ENCODE measurements at regions of chr17 and their contacts with region 1.

Region 1: DNA sequence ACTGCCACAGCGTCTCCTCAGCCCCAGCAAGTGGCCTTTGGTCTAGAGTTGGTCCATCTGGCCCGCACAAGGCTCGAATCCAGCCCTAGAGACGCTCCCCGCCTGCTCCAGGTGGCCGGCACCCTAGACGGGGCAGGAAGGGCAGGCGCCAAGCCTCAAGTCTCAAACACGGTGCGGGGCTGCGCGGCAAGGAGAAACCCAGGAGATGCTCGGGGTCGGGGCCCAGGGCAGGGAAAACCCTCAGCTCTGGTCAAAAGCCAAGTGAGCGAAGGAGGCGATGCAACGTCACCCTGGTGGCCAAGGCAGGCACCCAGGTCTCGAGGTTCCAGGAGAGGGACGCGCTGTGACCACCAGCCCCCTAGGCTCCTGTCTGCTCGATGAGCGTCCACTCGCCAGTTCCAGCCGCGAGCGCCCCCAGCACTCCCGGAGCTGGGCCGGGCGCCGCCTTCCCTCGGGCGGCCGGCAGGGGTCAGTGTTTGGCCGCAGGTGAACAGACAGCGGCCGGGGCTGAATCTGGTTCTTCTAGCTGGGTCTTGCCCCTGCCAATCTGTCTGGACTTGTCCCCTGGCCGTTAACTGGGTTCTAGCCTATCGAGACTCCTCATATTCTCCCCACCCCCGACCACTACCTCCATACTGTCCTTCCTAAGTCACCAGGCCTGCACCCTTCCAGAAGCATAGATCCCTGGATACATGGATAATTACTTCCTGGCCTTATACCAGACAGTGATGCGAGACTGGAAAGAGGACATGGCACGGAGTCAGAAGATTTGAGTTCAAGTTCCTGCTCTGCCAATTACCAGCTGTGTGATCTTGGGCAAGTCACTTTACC is 44.0 kb downstream of the PRAC1 start:
- DNase-seq: peak; percentile 69 to 87
- H3K4me3 ChIP-seq: no peak overlapping the region
- H3K4me3 Mint-ChIP-seq: no peak overlapping the region
- H3K27ac Mint-ChIP-seq: no peak overlapping the region
- H3K4me1 ChIP-seq: no peaks in the 10 kb centered on the region
- H3K4me1 Mint-ChIP-seq: no peaks in the 10 kb centered on the region
- H3K27me3 ChIP-seq: no peaks in the 10 kb centered on the region
- H3K27me3 Mint-ChIP-seq: peaks cover 8% of the 10 kb centered on the region
- CTCF ChIP-seq: peak; percentile 99

Region 2: DNA sequence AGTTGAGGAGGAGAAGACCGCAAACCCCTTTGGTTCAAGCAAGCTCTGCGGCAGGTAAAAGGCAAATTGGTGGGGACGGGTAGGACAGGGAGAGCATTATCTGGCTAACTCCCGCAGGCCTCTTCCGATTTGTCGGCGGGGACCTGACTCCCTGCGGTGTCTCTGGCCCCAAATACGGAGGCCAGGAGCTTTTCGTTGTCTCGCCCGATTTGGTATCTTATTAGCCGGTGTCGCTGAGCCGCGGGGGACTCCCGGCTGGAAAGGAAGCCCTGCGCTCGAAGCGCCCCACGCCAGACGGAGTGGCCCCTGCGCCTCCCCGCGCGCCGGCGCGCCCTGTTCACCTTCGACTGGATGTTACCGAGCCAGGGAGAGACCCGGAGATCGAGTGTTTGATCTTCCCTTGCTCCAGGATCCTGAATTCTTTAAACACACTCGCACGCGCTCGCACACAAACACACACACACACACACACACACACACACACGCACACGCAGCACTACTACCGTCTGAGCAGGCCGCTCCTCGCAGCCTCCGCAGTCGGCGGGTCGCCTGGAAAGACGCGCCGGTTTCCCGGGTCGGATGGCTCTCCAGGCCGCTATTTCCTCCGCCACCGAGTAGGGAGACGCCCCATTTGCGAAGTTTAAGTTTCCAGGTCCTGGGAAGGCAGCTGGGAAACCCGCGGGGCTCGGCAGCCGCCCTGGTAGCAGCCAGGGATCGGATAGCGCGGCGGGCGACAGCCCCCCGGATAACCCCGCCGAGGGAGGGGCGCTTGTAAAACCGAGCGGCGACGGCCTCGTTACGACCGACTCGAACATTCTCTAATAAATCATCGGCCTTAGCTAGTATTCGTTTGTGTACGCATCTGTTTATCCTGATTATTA is 40.6 kb after region 1 on chr17:
- CTCF ChIA-PET with region 1: interaction called, 16 read pairs
- POLR2A ChIA-PET with region 1: interaction called, 11 read pairs
- intact Hi-C with region 1: no loop called
- DNase-seq: peak in 1 of 2 experiments; percentile 42
- H3K4me3 ChIP-seq: peak overlapping the region; percentile 17
- H3K4me3 Mint-ChIP-seq: peak overlapping the region; percentile 65
- H3K27ac Mint-ChIP-seq: no peak overlapping the region
- H3K4me1 ChIP-seq: peaks cover 6% of the 10 kb centered on the region
- H3K4me1 Mint-ChIP-seq: no peaks in the 10 kb centered on the region
- H3K27me3 ChIP-seq: no peaks in the 10 kb centered on the region; the same call in none of the 2 replicates
- H3K27me3 Mint-ChIP-seq: no peaks in the 10 kb centered on the region
- CTCF ChIP-seq: no peak